ENCODE measurements at regions of chr4 and their contacts with region 1.

Region 1: DNA sequence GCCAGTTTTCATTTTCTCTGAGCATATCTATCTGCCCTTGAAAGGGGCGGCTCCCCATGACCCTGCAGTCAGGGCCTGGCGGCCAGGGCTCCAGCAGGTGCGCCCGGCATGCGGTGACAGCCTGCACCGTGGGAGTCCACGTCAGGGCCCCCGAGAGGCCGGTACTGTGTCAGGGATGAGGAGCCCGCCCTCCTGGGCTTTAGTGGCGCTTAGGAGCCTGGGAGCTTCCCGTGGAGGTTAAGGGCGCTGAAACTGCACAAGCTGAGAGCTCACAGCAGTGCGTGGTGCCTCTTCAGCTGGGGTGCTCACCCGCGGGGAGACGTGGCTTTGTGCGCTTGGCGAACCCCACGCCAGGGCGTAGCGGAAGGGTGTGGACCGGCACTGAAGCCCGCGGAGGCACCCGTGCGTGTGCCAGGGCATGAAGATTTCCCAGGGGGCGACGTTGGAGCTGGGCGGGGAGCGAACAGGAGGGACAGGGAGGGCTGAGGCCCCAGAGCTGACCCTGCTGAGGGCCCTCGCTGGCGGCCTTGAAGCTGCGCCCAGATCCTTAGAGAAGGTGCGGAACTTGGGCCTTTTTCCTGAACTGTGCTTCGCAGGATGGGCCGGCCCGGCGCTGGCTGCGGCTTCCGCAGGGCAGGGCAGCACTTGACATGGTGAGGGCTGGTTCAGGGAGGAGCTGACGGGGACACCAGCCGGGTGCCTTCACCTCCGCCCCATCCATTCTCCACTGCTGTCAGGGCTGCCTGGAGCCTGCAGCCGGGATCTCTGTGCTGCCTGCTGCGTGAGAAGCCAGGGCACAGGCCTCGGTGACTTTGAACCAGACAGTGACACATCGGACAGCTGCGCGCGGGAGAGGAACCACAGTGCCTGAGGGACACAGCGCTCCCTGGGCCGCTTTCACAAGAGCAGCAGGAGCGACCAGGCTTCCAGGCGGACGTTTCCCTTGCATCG is 32.9 kb downstream of the HTT-AS start:
- DNase-seq: no peak
- H3K4me3 ChIP-seq: peak overlapping the region; percentile 39
- CTCF ChIP-seq: no peak

Region 2: GRCh38 chr4:3017504-3017903 is 24.0 kb before region 1 on chr4:
- CTCF ChIA-PET with region 1: interaction called, 14 read pairs
- POLR2A ChIA-PET with region 1: no interaction called
- DNase-seq: no peak
- H3K4me3 ChIP-seq: no peak overlapping the region
- CTCF ChIP-seq: no peak

Measured in AG04449 (cell line).